Mammary epithelial cell (primary cell): ENCODE measurements at regions of chr14 and their contacts with region 1.

Region 1: DNA sequence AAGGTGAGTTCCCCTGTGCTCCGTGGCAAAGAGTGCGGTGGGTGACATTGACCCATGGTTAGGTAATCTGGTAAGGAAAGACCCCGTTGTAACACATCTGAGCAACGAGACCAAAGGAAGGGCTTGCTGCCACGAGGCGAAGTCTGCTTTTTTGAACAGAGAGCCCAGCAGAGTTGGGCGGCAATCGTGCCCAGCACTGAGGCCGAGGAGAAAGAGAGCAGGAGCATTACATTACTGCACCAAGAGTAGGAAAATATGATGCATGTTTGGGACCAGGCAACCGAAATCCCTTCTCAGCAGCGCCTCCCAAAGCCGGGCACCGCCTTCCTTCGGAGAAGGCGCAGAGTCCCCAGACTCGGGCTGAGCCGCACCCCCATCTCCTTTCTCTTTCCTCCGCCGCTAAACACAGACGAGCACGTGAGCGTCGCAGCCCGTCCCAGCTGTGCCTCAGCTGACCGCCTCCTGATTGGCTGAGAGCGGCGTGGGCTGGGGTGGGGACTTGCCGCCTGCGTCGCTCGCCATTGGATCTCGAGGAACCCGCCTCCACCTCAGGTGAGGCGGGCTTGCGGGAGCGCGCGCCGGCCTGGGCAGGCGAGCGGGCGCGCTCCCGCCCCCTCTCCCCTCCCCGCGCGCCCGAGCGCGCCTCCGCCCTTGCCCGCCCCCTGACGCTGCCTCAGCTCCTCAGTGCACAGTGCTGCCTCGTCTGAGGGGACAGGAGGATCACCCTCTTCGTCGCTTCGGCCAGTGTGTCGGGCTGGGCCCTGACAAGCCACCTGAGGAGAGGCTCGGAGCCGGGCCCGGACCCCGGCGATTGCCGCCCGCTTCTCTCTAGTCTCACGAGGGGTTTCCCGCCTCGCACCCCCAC is at the start of gene HIF1A:
- DNase-seq: peak; percentile 99
- H3K4me3 ChIP-seq: peak within 1 kb of the TSS; percentile 87 to 96 (median 90)
- H3K27ac ChIP-seq: peak within 1 kb of the TSS; percentile 90
- H3K4me1 ChIP-seq: peaks cover 20% of the 10 kb centered on the region
- H3K27me3 ChIP-seq: no peaks in the 10 kb centered on the region
- CTCF ChIP-seq: peak in 1 of 2 donors; percentile 37
- total RNA-seq, gene HIF1A: 227 to 682 TPM

Region 2: GRCh38 chr14:61475316-61475715 is 219.7 kb before region 1 on chr14:
- CTCF ChIA-PET with region 1: no interaction called
- dilution Hi-C with region 1: no loop called
- in situ Hi-C with region 1: no loop called
- intact Hi-C with region 1: loop called (anchors 2 kb)
- DNase-seq: peak; percentile 62
- H3K4me3 ChIP-seq: no peak overlapping the region
- H3K27ac ChIP-seq: no peak overlapping the region
- H3K4me1 ChIP-seq: peaks cover 59% of the 10 kb centered on the region
- H3K27me3 ChIP-seq: no peaks in the 10 kb centered on the region
- CTCF ChIP-seq: peak; percentile 64 to 66

Region 3: GRCh38 chr14:61525293-61526011 is 169.6 kb before region 1 on chr14:
- CTCF ChIA-PET with region 1: no interaction called
- dilution Hi-C with region 1: no loop called
- in situ Hi-C with region 1: no loop called
- intact Hi-C with region 1: loop called (anchors 1 kb)
- DNase-seq: peak; percentile 100
- H3K4me3 ChIP-seq: no peak overlapping the region
- H3K27ac ChIP-seq: peak overlapping the region; percentile 89
- H3K4me1 ChIP-seq: peaks cover 62% of the 10 kb centered on the region
- H3K27me3 ChIP-seq: no peaks in the 10 kb centered on the region
- CTCF ChIP-seq: no peak

Region 4: GRCh38 chr14:61569783-61570182 is 125.3 kb before region 1 on chr14:
- CTCF ChIA-PET with region 1: interaction called, 4 read pairs
- dilution Hi-C with region 1: no loop called
- in situ Hi-C with region 1: loop called in 1 of 2 experiments (anchors 10 kb)
- intact Hi-C with region 1: loop called (anchors 1 kb)
- DNase-seq: peak; percentile 95
- H3K4me3 ChIP-seq: no peak overlapping the region
- H3K27ac ChIP-seq: peak overlapping the region; percentile 80
- H3K4me1 ChIP-seq: peaks cover 68% of the 10 kb centered on the region
- H3K27me3 ChIP-seq: no peaks in the 10 kb centered on the region
- CTCF ChIP-seq: no peak

Region 5: GRCh38 chr14:61730756-61731373 is 35.8 kb after region 1 on chr14:
- CTCF ChIA-PET with region 1: no interaction called
- dilution Hi-C with region 1: no loop called
- in situ Hi-C with region 1: no loop called
- intact Hi-C with region 1: loop called (anchors 5 kb)
- DNase-seq: no peak
- H3K4me3 ChIP-seq: no peak overlapping the region
- H3K27ac ChIP-seq: no peak overlapping the region
- H3K4me1 ChIP-seq: peaks cover 14% of the 10 kb centered on the region
- H3K27me3 ChIP-seq: no peaks in the 10 kb centered on the region
- CTCF ChIP-seq: peak; percentile 14 to 40